Activated naive CD4-positive, alpha-beta T cell treated with anti-CD3 and anti-CD28 coated beads for 36 hours (primary cell): ENCODE measurements at regions of chr4 and their contacts with region 1.

Region 1: GRCh38 chr4:123599920-123600810 is 203.6 kb downstream of the SPRY1 start:
- DNase-seq: peak; percentile 48
- H3K4me3 Mint-ChIP-seq: no peak overlapping the region
- H3K27ac Mint-ChIP-seq: no peak overlapping the region
- H3K4me1 Mint-ChIP-seq: peaks cover 19% of the 10 kb centered on the region
- H3K27me3 Mint-ChIP-seq: no peaks in the 10 kb centered on the region

Region 2: GRCh38 chr4:123616951-123617461 is 16.8 kb after region 1 on chr4:
- CTCF ChIA-PET with region 1: no interaction called
- intact Hi-C with region 1: loop called (anchors 2 kb)
- DNase-seq: peak; percentile 55
- H3K4me3 Mint-ChIP-seq: no peak overlapping the region
- H3K27ac Mint-ChIP-seq: no peak overlapping the region
- H3K4me1 Mint-ChIP-seq: peaks cover 10% of the 10 kb centered on the region
- H3K27me3 Mint-ChIP-seq: no peaks in the 10 kb centered on the region